Motor neuron (in vitro differentiated cells): ENCODE measurements at regions of chr4 and their contacts with region 1.

Region 1: GRCh38 chr4:184733654-184734524 is at the start of gene CENPU:
- ATAC-seq: peak; percentile 87 to 97 (median 96)
- H3K4me3 ChIP-seq: peak within 1 kb of the TSS; percentile 49 to 85 (median 65)
- H3K27ac ChIP-seq: peak within 1 kb of the TSS in 1 of 2 donors; percentile 47
- H3K4me1 ChIP-seq: peaks cover 2 to 4% of the 10 kb centered on the region in 2 donors
- total RNA-seq, gene CENPU: 0.61 to 59.7 (median 3.4) TPM

Region 2: GRCh38 chr4:184983672-184984356 is 249.9 kb after region 1 on chr4:
- in situ Hi-C with region 1: loop called in 1 of 9 experiments (anchors 25 kb)
- ATAC-seq: peak; percentile 83 to 99 (median 98)
- H3K4me3 ChIP-seq: peak overlapping the region in 1 of 5 donors; percentile 1
- H3K27ac ChIP-seq: peak overlapping the region; percentile 36 to 47
- H3K4me1 ChIP-seq: peaks cover 16 to 23% of the 10 kb centered on the region in 2 donors